ENCODE measurements at regions of chr7 and their contacts with region 1.

Region 1: DNA sequence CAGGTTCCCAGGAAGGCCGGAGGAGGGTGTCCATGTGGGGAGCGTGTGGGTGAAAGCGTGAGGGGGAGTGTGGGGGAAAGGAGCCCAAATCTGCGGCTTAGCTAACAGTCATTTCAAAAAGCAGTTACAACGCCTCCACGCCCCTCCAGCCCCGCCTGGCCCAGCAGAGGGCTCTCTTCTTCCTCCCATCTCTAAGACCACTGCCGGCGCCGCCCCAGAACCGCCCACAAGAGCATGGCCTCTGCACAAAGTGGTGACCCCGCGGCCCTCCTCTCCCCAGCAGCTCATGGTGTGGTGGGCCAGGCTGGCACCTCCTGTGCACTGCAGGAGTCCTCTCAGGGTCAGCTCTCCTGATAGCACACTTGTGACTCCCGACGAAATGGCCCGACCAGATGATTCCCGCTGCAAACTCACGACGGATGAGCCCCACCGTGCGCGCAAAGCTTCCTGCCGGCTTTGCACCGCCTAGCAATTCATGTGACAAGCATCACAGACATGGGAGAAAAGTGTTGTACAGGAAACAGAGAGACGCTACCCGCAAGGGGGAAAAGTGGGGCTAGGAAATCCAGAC is 12.4 kb upstream of the HUS1 start:
- DNase-seq: peak; percentile 87
- ATAC-seq: peak; percentile 98
- H3K4me3 Mint-ChIP-seq: peak overlapping the region; percentile 84
- H3K27ac Mint-ChIP-seq: peak overlapping the region; percentile 90
- H3K4me1 Mint-ChIP-seq: peaks cover 21% of the 10 kb centered on the region
- H3K27me3 Mint-ChIP-seq: no peaks in the 10 kb centered on the region

Region 2: GRCh38 chr7:48004638-48005037 is 12.8 kb after region 1 on chr7:
- POLR2A ChIA-PET with region 1: no interaction called
- DNase-seq: no peak
- ATAC-seq: no peak
- H3K4me3 Mint-ChIP-seq: no peak overlapping the region
- H3K27ac Mint-ChIP-seq: no peak overlapping the region
- H3K4me1 Mint-ChIP-seq: no peaks in the 10 kb centered on the region
- H3K27me3 Mint-ChIP-seq: peaks cover 7% of the 10 kb centered on the region

Region 3: GRCh38 chr7:48088559-48089045 is 96.8 kb after region 1 on chr7:
- POLR2A ChIA-PET with region 1: interaction called, 15 read pairs
- DNase-seq: no peak
- ATAC-seq: peak; percentile 79
- H3K4me3 Mint-ChIP-seq: peak overlapping the region; percentile 82
- H3K27ac Mint-ChIP-seq: peak overlapping the region; percentile 94
- H3K4me1 Mint-ChIP-seq: peaks cover 54% of the 10 kb centered on the region
- H3K27me3 Mint-ChIP-seq: no peaks in the 10 kb centered on the region

Region 4: DNA sequence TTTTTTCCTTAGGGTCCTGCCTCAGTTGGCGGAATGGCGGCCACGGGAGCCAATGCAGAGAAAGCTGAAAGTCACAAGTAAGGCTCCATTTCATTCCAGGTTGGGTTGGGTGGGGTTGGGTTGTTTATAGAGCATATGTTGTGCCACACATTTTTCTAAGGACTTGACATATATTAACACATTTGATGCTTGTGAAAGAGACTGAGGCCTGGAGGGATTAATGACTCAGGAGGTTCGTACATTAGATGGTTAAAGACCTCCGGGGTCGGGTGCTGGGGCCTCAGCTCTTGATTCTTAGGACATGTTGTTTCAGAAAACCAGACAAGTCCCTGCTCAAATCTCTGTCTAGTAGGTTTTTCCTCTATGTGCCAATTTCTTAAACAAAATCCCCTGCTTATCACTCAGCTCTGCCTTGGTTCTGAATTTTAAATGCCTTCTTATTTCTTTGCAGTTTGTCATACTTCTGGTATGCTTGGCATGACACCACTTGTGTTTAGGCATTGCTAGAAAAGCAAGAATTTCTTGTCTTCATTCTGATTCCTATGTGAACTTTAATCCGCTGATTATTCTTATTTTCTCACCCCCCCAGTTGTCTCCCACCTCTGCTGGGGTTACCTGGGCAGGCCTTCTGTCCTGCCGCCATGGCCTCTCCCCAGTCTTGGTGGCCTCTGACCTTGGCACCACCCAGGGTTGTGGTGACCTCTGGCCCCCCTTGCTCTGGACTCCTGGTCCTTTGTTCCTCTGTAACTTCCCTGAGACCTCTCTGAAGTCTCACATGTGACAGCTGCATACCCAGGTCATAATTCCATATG is 103.1 kb after region 1 on chr7:
- POLR2A ChIA-PET with region 1: interaction called, 15 read pairs
- DNase-seq: no peak
- ATAC-seq: no peak
- H3K4me3 Mint-ChIP-seq: no peak overlapping the region
- H3K27ac Mint-ChIP-seq: peak overlapping the region; percentile 64
- H3K4me1 Mint-ChIP-seq: peaks cover 57% of the 10 kb centered on the region
- H3K27me3 Mint-ChIP-seq: no peaks in the 10 kb centered on the region

Region 5: GRCh38 chr7:48109848-48110663 is 118.2 kb after region 1 on chr7:
- POLR2A ChIA-PET with region 1: interaction called, 31 read pairs
- DNase-seq: peak; percentile 89
- ATAC-seq: peak; percentile 89
- H3K4me3 Mint-ChIP-seq: no peak overlapping the region
- H3K27ac Mint-ChIP-seq: peak overlapping the region; percentile 64
- H3K4me1 Mint-ChIP-seq: peaks cover 12% of the 10 kb centered on the region
- H3K27me3 Mint-ChIP-seq: no peaks in the 10 kb centered on the region

Measured in activated naive CD8-positive, alpha-beta T cell treated with anti-CD3 and anti-CD28 coated beads, Interleukin-2, amount 10 ng/mL, durations not matched to agents 7 days and 5 days (primary cell).